Endothelial cell of umbilical vein (primary cell): ENCODE measurements at regions of chr19 and their contacts with region 1.

Region 1: DNA sequence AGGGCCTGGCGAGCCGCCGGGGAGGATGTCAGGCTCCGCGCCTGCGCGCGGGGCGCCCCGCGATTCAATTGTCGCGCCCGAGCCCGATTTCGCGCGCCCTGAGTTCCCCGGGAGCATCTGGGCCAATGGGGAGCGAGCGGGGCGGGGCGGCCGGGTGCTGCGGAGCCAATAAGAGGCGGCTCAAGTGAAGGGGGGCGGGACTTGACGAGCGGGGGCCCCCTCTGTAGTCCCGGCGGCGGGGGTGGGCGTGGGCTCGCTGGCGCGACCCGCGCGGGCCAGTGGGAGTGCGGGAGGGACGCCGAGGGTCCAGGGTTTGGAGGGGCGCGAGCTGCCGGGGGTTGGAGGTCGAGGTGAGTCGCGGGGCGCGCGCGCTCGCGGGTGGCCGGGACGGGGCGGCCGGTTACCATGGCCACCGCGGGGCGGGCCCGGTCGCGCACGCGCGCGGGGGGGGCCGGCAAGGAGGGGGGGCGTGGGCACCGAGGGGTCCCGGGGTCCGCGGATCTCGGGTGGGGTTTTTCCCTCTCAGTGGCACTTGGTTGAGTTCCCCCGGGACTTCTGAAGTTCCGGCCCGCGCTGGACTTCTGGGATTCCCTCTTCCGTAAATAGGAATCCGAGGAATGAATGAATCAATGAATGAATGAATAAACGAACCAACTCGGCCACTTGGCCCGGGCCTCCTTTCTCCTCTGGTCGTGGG is 744 bp downstream of the UHRF1 start:
- DNase-seq: peak; percentile 87
- H3K4me3 ChIP-seq: peak overlapping the region; percentile 71 to 77 (median 74)
- H3K27ac ChIP-seq: peak overlapping the region; percentile 58
- H3K4me1 ChIP-seq: peaks cover 26% of the 10 kb centered on the region
- H3K27me3 ChIP-seq: no peaks in the 10 kb centered on the region
- CTCF ChIP-seq: no peak
- POLR2A ChIP-seq: no peak

Region 2: DNA sequence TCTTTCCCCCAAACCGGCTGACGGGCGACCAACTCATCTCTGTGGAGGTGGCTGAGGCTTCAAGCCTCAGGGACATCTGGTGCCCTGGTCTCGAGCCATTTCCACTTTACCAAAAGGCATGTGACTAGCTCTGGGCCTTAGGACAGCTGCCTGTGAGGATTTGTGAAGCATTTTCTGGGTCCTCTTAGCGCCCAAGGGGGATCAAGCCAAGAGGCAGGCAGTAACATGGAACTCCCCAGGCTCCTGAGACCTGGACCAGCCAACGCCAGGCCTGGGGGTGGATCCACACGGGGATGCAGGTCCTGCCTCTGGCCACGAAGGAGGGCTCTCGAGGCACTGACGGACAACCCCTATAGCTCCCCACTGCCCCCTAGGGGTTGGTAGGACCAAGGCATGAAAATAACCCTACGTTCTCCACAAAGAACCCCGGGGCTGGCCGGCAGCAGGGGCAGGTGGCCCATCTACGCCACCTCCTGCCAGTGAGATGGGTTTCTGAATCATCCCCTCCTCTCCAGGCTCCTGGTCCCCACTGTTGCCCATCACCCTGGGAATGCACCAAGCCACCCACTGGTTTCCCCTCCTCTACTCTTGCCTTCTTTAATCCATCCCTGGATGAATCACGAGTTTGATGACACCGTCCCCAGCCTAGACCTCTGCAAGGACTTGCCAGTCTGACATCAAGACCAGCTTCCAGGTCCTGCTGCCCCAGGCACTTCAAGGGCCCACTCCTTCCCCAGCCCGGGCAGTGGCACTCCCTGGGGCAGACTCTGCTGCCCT is 232.9 kb before region 1 on chr19:
- CTCF ChIA-PET with region 1: no interaction called
- POLR2A ChIA-PET with region 1: no interaction called
- dilution Hi-C with region 1: no loop called
- intact Hi-C with region 1: no loop called
- DNase-seq: peak; percentile 18
- H3K4me3 ChIP-seq: no peak overlapping the region
- H3K27ac ChIP-seq: no peak overlapping the region
- H3K4me1 ChIP-seq: no peaks in the 10 kb centered on the region
- H3K27me3 ChIP-seq: no peaks in the 10 kb centered on the region
- CTCF ChIP-seq: peak; percentile 32 to 60
- POLR2A ChIP-seq: no peak

Region 3: GRCh38 chr19:4732680-4733114 is 177.3 kb before region 1 on chr19:
- CTCF ChIA-PET with region 1: interaction called, 3 read pairs
- POLR2A ChIA-PET with region 1: no interaction called
- dilution Hi-C with region 1: no loop called
- intact Hi-C with region 1: loop called (anchors 10 kb)
- DNase-seq: peak; percentile 48
- H3K4me3 ChIP-seq: no peak overlapping the region
- H3K27ac ChIP-seq: no peak overlapping the region
- H3K4me1 ChIP-seq: no peaks in the 10 kb centered on the region
- H3K27me3 ChIP-seq: no peaks in the 10 kb centered on the region
- CTCF ChIP-seq: peak; percentile 44 to 74
- POLR2A ChIP-seq: no peak

Region 4: DNA sequence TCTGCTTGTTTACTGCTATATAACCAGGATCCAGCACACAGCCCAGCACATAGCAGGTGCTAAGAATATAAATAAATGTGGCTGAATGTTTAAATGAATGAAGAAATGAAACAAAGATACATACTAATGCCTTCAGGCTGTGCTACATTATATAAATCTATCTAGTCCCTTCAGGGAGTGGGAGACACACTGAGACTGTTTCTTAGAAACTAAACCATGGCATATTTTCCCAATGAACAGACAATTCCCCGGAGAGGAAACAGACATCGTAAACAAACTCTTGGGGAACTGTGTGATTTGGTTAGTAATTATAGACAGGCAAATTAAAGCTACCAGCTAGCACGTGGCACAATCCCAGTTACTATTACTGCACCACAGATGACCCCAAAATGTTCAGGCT is 128.2 kb before region 1 on chr19:
- CTCF ChIA-PET with region 1: no interaction called
- POLR2A ChIA-PET with region 1: no interaction called
- dilution Hi-C with region 1: no loop called
- intact Hi-C with region 1: no loop called
- DNase-seq: no peak
- H3K4me3 ChIP-seq: no peak overlapping the region
- H3K27ac ChIP-seq: no peak overlapping the region
- H3K4me1 ChIP-seq: no peaks in the 10 kb centered on the region
- H3K27me3 ChIP-seq: no peaks in the 10 kb centered on the region
- CTCF ChIP-seq: no peak
- POLR2A ChIP-seq: no peak

Region 5: GRCh38 chr19:4815426-4816201 is 94.4 kb before region 1 on chr19:
- CTCF ChIA-PET with region 1: interaction called, 164 read pairs
- POLR2A ChIA-PET with region 1: no interaction called
- dilution Hi-C with region 1: no loop called
- intact Hi-C with region 1: loop called (anchors 1 kb)
- DNase-seq: peak; percentile 88
- H3K4me3 ChIP-seq: peak overlapping the region in 1 of 3 experiments; percentile 14
- H3K27ac ChIP-seq: no peak overlapping the region
- H3K4me1 ChIP-seq: peaks cover 5% of the 10 kb centered on the region
- H3K27me3 ChIP-seq: no peaks in the 10 kb centered on the region
- CTCF ChIP-seq: no peak
- POLR2A ChIP-seq: no peak

Region 6: DNA sequence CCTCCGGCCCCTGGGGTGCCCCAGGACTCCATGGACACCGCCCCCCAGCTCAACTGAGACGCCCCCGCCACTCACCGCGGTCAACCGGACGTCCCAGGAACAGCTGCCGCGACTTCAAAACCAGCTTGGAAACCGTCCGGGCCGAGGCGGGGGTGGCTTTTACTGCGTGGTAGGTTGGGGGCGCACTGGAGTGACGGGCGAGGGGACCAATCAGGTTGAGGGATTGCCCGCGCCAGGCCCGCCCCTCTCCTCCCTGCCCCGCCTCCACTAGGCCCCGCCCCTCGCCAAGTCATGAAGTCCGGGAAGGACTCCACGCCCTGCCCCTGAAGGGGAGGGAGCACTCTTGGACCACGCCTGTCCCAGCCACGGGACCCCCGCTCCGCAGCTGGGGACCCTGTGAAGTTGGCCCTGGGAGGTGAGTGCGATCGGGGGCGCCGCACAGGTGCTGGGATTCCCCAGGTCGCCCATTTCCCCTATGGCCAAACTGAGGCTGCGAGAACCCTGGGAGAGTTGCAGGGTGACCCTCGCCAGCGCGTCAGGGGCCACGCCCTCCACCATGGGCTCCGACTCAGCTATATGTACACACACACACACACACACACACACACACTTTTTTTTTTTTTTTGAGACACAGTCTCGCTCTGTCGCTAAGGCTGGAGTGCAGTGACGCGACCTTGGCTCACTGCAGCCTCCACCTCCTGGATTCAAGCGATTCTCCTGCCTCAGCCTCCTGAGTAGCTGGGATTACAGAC is 42.3 kb before region 1 on chr19 and contains the start of gene PLIN3:
- CTCF ChIA-PET with region 1: interaction called, 176 read pairs
- POLR2A ChIA-PET with region 1: interaction called, 3 read pairs
- dilution Hi-C with region 1: no loop called
- intact Hi-C with region 1: loop called (anchors 1 kb)
- DNase-seq: peak; percentile 98
- H3K4me3 ChIP-seq: peak within 1 kb of the TSS; percentile 70 to 95 (median 92)
- H3K27ac ChIP-seq: peak within 1 kb of the TSS; percentile 49
- H3K4me1 ChIP-seq: peaks cover 6% of the 10 kb centered on the region
- H3K27me3 ChIP-seq: no peaks in the 10 kb centered on the region
- CTCF ChIP-seq: no peak
- POLR2A ChIP-seq: peak; percentile 43
- total RNA-seq, gene PLIN3: 76.8 and 77.9 TPM in 2 replicates

Region 7: GRCh38 chr19:5031231-5032100 is 121.4 kb after region 1 on chr19:
- CTCF ChIA-PET with region 1: interaction called, 26 read pairs
- POLR2A ChIA-PET with region 1: no interaction called
- dilution Hi-C with region 1: no loop called
- intact Hi-C with region 1: no loop called
- DNase-seq: peak; percentile 61
- H3K4me3 ChIP-seq: no peak overlapping the region
- H3K27ac ChIP-seq: no peak overlapping the region
- H3K4me1 ChIP-seq: no peaks in the 10 kb centered on the region
- H3K27me3 ChIP-seq: no peaks in the 10 kb centered on the region
- CTCF ChIP-seq: peak; percentile 92 to 95
- POLR2A ChIP-seq: no peak

Region 8: GRCh38 chr19:5809053-5809452 is 899.0 kb after region 1 on chr19:
- CTCF ChIA-PET with region 1: no interaction called
- POLR2A ChIA-PET with region 1: no interaction called
- dilution Hi-C with region 1: no loop called
- intact Hi-C with region 1: no loop called
- DNase-seq: no peak
- H3K4me3 ChIP-seq: no peak overlapping the region
- H3K27ac ChIP-seq: no peak overlapping the region
- H3K4me1 ChIP-seq: no peaks in the 10 kb centered on the region
- H3K27me3 ChIP-seq: peaks cover 2 to 7% of the 10 kb centered on the region in 2 experiments
- CTCF ChIP-seq: no peak
- POLR2A ChIP-seq: no peak